ENCODE measurements at regions of chr1 and their contacts with region 1.

Region 1: DNA sequence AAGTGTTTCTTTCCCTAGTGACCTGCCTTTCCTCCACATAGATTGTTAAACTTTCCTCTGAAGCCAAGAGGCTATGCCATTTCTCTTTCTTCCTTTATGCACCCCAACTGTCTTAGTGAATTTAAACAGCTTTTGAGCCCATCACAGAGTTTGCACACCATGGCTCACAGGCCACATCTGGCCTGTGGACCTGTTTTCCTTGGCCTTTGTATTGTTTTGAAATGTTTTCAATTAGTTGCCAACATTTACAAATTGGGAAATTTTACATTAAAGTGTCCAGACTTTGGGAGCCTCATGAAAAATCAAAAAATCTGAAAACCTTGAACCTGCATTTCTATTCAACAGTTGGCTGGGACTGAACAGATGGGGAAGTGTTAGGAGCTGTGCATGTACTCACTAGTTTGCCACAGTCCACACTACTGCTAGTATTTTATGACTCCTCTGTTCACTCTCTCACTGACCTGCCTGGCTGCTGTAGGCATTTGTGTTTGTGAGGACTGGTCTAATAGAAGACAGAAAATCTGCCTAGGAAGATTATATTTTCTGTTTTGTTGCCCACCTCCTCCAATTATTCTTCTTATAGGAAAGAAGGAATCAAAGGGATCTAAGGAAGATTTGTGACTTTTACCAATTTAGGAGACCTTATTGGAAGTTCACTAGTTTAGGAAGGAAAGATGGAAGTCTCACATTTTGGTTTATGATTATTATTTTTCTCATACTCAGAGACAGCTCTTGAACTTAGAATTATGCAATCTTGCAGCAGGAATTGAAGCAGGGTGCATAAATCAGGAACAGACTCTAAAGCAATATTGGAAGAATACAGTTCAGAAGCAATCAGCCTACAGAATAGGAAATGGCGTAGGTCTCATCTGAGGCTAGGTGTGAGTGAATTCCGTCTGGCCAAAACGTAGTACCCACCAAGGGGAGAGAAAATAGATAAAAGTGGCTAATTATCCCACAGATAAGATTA is 134.7 kb downstream of the HLX start:
- DNase-seq: peak in 2 of 3 donors; percentile 21 to 23
- H3K4me3 ChIP-seq: no peak overlapping the region
- H3K4me3 Mint-ChIP-seq: peak overlapping the region in 1 of 2 donors; percentile 56
- H3K27ac ChIP-seq: no peak overlapping the region
- H3K27ac Mint-ChIP-seq: peak overlapping the region in 4 of 7 donors; percentile 44 to 66 (median 58)
- H3K4me1 ChIP-seq: peaks cover 30 to 35% of the 10 kb centered on the region in 2 donors
- H3K4me1 Mint-ChIP-seq: peaks cover 37% of the 10 kb centered on the region
- H3K27me3 ChIP-seq: no peaks in the 10 kb centered on the region
- H3K27me3 Mint-ChIP-seq: peaks cover 2 to 9% (median 3%) of the 10 kb centered on the region in 3 donors
- CTCF ChIP-seq: no peak

Region 2: GRCh38 chr1:220448217-220448616 is 565.8 kb before region 1 on chr1:
- intact Hi-C with region 1: no loop called
- DNase-seq: no peak
- H3K4me3 ChIP-seq: no peak overlapping the region
- H3K4me3 Mint-ChIP-seq: no peak overlapping the region
- H3K27ac ChIP-seq: no peak overlapping the region
- H3K27ac Mint-ChIP-seq: no peak overlapping the region
- H3K4me1 ChIP-seq: no peaks in the 10 kb centered on the region
- H3K4me1 Mint-ChIP-seq: no peaks in the 10 kb centered on the region
- H3K27me3 ChIP-seq: no peaks in the 10 kb centered on the region
- H3K27me3 Mint-ChIP-seq: peaks cover 2 to 9% (median 5%) of the 10 kb centered on the region in 3 donors
- CTCF ChIP-seq: no peak

Region 3: DNA sequence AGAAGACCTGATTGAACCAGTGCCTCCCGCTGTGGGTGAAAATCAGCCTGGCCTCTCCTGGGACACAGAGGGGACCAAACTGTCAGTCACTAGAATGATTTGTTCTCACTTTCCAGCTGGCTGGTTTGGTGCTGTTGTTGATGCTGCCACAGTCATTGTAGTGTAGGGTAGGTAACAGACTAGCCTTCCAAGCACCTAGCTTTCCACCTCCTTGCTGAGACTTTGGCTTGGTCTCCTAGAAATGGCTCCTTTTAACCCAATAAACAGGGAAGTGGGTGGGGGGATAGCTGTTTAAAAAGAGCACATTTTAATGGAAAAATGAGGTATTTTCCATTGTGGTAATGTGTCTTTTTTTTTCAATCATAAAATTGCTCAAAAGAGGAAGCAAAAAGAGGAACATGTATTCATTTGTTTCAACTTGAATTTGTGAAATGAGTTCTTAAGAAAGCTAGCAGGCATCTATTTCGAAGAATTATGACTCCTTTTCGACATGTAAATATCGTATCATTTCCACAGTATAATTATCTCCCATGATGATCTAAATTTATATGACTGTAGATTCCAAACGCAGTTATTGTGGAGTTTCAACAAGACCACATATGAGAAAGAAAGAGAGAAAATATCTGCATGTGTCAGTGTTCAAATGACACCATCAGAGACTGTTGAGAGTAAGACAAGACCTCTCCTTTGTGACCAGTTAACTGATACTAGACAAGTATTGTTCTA is 55.4 kb after region 1 on chr1:
- intact Hi-C with region 1: loop called (anchors 5 to 10 kb)
- DNase-seq: peak; percentile 51 to 75 (median 68)
- H3K4me3 ChIP-seq: peak overlapping the region in 1 of 3 experiments; percentile 42
- H3K4me3 Mint-ChIP-seq: peak overlapping the region in 1 of 2 donors; percentile 68
- H3K27ac ChIP-seq: peak overlapping the region in 1 of 2 donors; percentile 71
- H3K27ac Mint-ChIP-seq: peak overlapping the region; percentile 55 to 95 (median 93)
- H3K4me1 ChIP-seq: peaks cover 54 to 75% of the 10 kb centered on the region in 2 donors
- H3K4me1 Mint-ChIP-seq: peaks cover 70% of the 10 kb centered on the region
- H3K27me3 ChIP-seq: no peaks in the 10 kb centered on the region
- H3K27me3 Mint-ChIP-seq: peaks cover 0 to 1% (median 0%) of the 10 kb centered on the region in 3 donors
- CTCF ChIP-seq: no peak

Measured in CD14-positive monocyte (primary cell).